Heart right ventricle (tissue), 16 donors: ENCODE measurements at regions of chr17 and their contacts with region 1.

Region 1: DNA sequence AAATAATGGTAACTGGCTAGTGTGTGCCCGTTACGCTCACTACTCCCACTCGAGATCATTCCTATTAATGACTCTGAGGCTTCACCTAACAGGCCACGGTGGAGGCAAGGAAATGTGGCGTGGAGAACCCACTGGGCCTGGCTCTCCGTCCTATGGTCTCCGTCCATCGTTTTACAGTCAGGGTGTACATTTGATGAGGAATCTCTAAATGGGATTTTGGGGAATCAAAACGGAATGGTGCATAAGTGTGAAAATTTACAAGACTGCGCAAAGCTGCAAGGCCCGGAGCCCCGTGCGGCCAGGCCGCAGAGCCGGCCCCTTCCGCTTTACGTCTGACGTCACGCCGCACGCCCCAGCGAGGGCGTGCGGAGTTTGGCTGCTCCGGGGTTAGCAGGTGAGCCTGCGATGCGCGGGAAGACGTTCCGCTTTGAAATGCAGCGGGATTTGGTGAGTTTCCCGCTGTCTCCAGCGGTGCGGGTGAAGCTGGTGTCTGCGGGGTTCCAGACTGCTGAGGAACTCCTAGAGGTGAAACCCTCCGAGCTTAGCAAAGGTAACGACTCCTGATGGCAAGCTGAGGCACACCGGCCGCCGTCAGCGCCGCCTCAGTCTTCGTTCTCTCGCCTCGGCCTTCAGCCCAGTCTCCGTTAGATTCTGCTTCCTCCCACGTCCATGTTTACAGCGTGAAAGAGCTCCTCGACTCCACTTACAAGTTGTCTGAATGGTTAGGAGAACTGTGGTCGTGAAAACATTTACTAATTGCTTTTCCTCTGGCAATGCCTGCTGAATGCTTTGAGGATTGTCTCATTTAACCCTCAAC is at the start of gene RAD51C:
- DNase-seq: peak; percentile 84 to 87
- ATAC-seq: peak; percentile 99 to 100 (median 99)
- H3K4me3 ChIP-seq: peak within 1 kb of the TSS; percentile 21 to 87 (median 72)
- H3K27ac ChIP-seq: peak within 1 kb of the TSS in 9 of 10 donors; percentile 67 to 90 (median 82)
- H3K4me1 ChIP-seq: peaks cover 0 to 25% (median 16%) of the 10 kb centered on the region in 9 donors
- H3K27me3 ChIP-seq: no peaks in the 10 kb centered on the region
- CTCF ChIP-seq: peak in 1 of 9 donors; percentile 19
- total RNA-seq, gene RAD51C: 33.2 to 40.7 (median 37.6) TPM

Region 2: DNA sequence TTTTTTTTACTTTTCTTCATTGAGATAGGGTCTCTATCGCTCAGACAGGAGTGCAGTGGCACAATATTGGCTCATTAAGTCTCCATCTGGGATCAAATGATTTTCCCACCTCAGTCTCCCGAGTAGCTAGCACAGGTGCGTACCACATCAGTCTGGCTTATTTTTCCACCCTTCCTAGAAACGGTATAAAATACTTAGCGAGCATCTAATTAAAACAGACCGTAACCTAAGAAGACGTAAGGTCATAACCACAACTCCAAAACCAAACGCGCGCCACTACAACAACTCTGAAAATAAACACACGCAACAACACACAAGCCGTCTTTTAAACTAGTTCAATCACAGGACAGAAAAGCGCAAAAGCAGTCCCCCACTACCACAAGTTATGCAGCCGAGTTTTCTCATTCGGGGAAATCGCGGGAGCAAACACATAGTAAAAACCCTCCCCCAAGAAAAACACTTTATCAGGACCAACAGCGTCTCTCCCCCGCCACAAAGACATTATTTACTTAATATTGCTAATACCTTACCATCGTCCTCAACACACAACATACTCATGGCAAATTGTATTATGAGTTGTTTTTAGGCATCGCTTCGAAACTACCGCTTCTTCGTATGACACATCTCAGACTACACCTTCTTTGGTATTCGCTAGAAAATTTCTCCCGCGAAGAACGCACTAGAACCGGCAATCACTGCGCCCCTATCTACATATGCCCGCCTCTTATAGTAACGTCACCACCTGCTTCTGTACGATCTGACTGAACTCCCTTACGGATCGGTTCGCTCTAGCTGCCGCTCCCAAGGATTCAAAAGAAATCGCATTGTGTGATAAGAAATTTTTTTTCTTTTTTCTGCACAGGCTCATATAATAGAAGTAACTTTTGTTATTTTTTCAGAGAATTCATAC is 33.4 kb before region 1 on chr17:
- intact Hi-C with region 1: loop called in 1 of 10 experiments (anchors 2 kb)
- DNase-seq: peak; percentile 16 to 92
- ATAC-seq: peak; percentile 95 to 98 (median 96)
- H3K4me3 ChIP-seq: peak overlapping the region in 9 of 10 donors; percentile 28 to 58 (median 49)
- H3K27ac ChIP-seq: peak overlapping the region; percentile 6 to 93 (median 78)
- H3K4me1 ChIP-seq: peaks cover 0 to 15% (median 3%) of the 10 kb centered on the region in 9 donors
- H3K27me3 ChIP-seq: no peaks in the 10 kb centered on the region
- CTCF ChIP-seq: no peak